Vagina (tissue), 2 donors: ENCODE measurements at regions of chr14 and their contacts with region 1.

Region 1: DNA sequence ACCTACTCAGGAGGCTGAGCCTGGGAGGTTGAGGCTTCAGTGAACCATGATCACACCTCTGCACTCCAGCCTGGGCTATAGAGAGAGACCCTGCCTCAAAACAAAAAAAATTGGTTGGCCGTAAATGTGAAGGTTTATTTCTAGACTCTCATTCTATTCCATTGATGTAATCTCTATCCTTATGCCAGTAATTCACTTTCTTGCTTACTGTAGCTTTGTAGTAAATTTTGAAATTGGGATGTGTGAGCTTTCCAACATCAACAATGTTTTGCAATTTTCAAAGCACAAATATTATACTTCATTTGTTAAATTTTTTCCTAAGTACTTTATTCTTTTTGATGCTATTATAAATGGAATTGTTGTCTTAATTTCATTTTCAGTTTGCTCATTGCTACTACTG is 24.6 kb downstream of the LIN52 start:
- DNase-seq: no peak
- H3K4me3 ChIP-seq: no peak overlapping the region
- H3K27ac ChIP-seq: no peak overlapping the region
- H3K4me1 ChIP-seq: no peaks in the 10 kb centered on the region
- H3K27me3 ChIP-seq: no peaks in the 10 kb centered on the region
- CTCF ChIP-seq: no peak
- POLR2A ChIP-seq: no peak

Region 2: GRCh38 chr14:74035556-74035955 is 73.8 kb before region 1 on chr14:
- intact Hi-C with region 1: no loop called
- DNase-seq: no peak
- H3K4me3 ChIP-seq: no peak overlapping the region
- H3K27ac ChIP-seq: no peak overlapping the region
- H3K4me1 ChIP-seq: no peaks in the 10 kb centered on the region
- H3K27me3 ChIP-seq: no peaks in the 10 kb centered on the region
- CTCF ChIP-seq: no peak
- POLR2A ChIP-seq: no peak

Region 3: DNA sequence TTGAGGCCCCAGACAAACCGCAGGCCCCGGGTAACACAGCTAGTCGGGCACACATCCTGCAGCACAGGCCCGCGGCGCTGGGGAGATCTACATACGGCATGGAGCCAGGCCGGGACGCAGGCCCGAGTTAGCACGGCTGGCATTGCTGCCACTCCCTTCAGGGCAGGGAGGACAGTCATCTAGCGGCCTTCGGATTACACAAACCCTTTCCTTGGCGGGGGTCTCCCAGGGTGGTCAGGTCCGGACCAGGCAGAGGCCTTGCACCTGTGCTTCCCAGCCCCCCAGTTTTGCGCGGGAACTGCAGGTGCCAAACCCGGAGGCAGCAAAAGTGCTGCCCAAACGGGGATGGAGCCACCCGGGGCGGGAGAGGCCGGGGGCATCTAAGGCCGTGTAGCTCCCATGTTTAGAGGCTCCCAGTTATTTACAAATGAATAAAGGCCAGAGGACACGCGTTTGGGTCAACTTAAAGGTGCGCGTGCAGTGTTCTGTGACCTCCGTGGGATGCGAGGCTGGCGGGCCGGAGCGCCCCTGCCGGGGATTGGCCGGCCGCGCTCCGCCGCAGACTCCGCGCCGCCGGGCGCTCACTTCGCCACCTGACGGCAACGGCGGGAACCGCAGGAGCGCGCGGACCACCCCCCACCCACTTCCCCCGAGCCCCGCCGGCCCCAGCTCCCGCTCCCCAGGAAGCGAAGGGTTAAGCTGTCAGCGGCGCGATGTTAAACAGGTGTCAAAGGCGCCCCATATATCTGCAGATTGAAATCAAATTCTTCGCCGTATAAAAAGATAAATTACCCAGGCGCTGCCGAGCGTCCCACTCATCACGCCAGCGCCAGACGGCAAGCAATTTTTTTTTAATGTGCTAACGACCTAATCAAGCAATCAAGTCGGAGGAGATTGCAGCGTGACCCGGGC is 148.0 kb after region 1 on chr14:
- intact Hi-C with region 1: loop called (anchors 5 kb)
- DNase-seq: no peak
- H3K4me3 ChIP-seq: peak overlapping the region; percentile 57 to 62
- H3K27ac ChIP-seq: no peak overlapping the region
- H3K4me1 ChIP-seq: peaks cover 18% of the 10 kb centered on the region
- H3K27me3 ChIP-seq: no peaks in the 10 kb centered on the region
- CTCF ChIP-seq: peak; percentile 58 to 80 (median 59)
- POLR2A ChIP-seq: no peak